Esophagus muscularis mucosa (tissue), 4 donors: ENCODE measurements at regions of chr15 and their contacts with region 1.

Region 1: DNA sequence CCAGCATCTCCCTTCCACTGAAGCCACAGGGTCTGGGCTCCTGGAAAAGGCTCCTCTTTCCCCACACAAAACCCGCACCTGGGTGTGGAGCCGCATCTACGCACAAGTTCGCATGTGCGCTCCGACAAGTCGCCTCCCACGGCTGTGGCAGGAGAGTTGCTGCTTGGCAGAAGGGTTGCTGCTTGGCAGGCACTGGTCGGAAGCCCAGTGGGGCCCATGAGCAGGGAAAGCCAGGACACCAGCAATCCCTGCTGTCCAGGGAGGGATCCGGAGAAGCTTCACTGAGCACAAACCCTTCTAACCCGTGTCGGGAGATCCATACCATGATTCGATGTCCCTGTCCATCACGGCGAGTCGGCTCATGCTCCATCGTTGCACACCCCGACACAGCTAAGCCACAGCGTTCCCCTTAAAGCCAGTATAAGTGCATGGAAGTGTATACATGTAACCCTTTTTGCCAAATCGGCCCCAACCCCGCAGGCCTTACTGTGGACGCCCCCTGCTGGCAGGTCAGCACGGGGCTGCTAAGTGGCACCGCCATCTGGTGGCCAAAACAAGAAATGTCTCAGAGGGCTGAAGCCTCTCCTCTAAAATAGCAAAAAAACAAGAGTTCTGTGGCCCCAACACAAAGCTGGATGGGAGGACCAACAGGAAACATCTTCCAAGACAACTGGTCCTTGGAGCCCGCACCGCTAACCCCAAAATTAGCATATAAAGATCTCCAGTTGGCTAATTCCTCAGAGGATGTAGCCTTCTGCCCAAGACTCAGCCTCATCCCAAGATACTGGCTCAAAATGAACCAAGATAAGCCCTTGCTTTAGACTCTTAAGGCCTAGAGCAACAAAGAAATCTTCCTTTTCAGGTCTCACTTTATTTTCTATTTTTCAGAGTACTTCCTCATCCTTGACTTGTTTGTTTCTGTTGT is 8.3 kb downstream of the ANKRD63 start:
- DNase-seq: peak; percentile 96
- H3K4me3 ChIP-seq: no peak overlapping the region
- H3K27ac ChIP-seq: no peak overlapping the region
- H3K4me1 ChIP-seq: peaks cover 4 to 7% (median 5%) of the 10 kb centered on the region in 4 donors
- H3K27me3 ChIP-seq: peaks cover 0 to 27% (median 3%) of the 10 kb centered on the region in 4 donors
- CTCF ChIP-seq: peak in 2 of 3 experiments; percentile 100
- EP300 ChIP-seq: no peak
- POLR2A ChIP-seq: no peak

Region 2: DNA sequence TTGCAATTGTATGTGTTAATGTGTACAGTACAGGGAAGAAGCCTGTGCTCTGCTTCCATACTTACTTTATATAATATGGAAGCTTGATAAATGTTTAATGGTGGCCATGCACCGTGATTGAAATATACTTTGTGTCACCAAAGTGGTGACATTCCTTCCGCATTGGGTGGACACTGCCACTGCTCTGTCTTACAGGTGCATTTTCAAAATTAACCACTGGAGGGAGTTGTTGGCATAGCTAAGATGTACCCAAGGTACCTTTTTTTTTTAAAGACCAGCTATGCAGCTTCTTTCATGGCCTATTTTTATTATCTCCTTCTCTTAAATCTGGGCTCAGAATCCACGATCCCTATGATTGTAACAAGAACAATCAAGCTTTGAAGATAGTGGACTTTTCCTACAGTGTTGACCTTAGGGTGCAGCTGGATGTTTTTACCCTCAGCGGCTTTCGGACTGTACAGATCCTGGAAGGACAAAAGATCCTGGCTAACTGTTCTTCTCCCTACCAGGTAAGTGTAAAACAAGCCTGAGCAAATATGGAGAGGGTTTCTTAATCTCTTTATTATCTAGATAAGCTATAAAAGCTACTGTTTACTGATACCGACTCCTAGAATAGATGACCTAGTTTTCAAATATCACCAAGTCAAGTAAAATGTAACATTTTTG is 57.3 kb before region 1 on chr15:
- intact Hi-C with region 1: loop called (anchors 1 kb)
- DNase-seq: no peak
- H3K4me3 ChIP-seq: no peak overlapping the region
- H3K27ac ChIP-seq: no peak overlapping the region
- H3K4me1 ChIP-seq: no peaks in the 10 kb centered on the region
- H3K27me3 ChIP-seq: no peaks in the 10 kb centered on the region
- CTCF ChIP-seq: peak; percentile 85 to 93 (median 87)
- EP300 ChIP-seq: no peak
- POLR2A ChIP-seq: no peak

Region 3: DNA sequence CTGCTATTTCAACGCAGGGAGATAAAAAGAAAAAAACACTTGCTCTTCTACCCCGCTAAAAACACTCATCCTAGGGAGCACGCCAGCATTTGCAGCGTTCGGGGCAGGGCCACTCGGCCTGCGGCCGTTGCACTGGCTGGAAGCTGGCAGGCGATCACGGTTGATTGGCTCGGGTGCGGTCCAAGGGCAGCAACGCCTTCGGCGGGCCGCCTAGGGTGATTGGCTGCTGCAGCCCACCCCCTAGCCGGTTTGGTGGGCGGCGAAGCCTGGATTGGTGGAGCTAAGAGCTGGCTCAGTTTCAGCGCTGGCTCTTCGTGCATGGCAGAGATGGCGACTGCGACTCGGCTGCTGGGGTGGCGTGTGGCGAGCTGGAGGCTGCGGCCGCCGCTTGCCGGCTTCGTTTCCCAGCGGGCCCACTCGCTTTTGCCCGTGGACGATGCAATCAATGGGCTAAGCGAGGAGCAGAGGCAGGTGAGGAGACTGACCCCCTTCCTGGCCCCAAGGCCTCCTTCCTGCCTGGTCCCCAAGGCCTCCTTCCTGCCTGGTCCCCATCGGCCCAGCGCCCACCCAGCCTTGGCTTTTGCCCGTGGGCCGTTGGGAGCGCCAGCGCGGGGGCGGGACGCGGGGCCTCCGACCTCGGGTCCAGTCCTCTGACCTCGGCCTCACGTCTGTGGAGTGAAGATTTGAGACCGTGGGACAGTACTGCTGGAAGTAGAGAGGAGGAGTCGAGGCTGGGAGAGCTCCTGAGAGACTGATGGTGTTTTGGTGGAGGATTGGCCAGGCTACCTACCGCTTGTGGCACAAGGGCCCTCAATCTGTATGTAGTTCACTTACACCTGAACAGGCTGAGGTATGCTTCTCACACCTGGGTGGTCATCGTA is 131.1 kb after region 1 on chr15 and contains the start of gene IVD:
- intact Hi-C with region 1: no loop called
- DNase-seq: peak; percentile 98
- H3K4me3 ChIP-seq: peak within 1 kb of the TSS; percentile 73 to 94 (median 88)
- H3K27ac ChIP-seq: peak within 1 kb of the TSS; percentile 78 to 85 (median 82)
- H3K4me1 ChIP-seq: peaks cover 21 to 33% (median 29%) of the 10 kb centered on the region in 4 donors
- H3K27me3 ChIP-seq: no peaks in the 10 kb centered on the region
- CTCF ChIP-seq: no peak
- EP300 ChIP-seq: no peak
- POLR2A ChIP-seq: no peak
- total RNA-seq, gene IVD: 38.8 to 50.7 (median 44.7) TPM

Region 4: DNA sequence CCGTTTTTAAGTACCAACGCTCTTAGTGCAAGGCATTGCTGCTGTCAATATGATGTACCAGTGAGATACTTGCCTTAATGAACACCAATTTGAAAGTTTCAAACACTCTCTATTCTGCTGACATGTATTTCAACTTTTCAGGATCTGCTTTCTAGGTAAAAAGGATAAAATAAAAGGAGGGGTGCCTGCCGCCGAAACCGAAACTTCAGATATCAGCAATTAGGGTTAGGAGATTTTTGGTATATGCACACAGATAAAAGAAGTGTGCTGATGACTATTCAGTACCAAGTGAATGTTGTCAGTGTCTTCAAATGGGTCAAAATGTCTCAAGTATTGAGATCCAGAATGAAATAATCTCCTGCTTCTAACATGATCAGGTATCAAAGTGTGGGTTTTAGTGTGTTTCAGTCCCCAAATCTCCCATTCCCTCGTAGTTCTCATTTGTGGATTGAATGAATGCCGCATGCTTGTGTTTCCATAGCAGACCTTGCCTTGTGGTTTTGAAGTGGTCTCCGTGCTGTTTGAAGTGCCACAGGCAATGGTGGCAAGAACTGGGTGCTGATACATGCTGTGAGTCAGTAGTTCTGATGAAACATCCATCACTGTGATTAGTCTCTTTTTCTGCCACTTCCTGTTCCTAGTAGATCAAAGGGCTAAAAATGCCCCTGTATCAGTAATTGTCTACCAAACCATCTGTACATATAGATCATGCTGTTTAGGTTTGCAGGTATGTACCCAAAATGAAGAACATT is 218.7 kb after region 1 on chr15:
- intact Hi-C with region 1: no loop called
- DNase-seq: no peak
- H3K4me3 ChIP-seq: no peak overlapping the region
- H3K27ac ChIP-seq: no peak overlapping the region
- H3K4me1 ChIP-seq: no peaks in the 10 kb centered on the region
- H3K27me3 ChIP-seq: no peaks in the 10 kb centered on the region
- CTCF ChIP-seq: no peak
- EP300 ChIP-seq: no peak
- POLR2A ChIP-seq: no peak

Region 5: GRCh38 chr15:40731034-40731433 is 456.4 kb after region 1 on chr15:
- intact Hi-C with region 1: no loop called
- DNase-seq: no peak
- H3K4me3 ChIP-seq: no peak overlapping the region
- H3K27ac ChIP-seq: no peak overlapping the region
- H3K4me1 ChIP-seq: no peaks in the 10 kb centered on the region
- H3K27me3 ChIP-seq: no peaks in the 10 kb centered on the region
- CTCF ChIP-seq: no peak
- EP300 ChIP-seq: no peak
- POLR2A ChIP-seq: no peak